ENCODE measurements at regions of chr22 and their contacts with region 1.

Region 1: DNA sequence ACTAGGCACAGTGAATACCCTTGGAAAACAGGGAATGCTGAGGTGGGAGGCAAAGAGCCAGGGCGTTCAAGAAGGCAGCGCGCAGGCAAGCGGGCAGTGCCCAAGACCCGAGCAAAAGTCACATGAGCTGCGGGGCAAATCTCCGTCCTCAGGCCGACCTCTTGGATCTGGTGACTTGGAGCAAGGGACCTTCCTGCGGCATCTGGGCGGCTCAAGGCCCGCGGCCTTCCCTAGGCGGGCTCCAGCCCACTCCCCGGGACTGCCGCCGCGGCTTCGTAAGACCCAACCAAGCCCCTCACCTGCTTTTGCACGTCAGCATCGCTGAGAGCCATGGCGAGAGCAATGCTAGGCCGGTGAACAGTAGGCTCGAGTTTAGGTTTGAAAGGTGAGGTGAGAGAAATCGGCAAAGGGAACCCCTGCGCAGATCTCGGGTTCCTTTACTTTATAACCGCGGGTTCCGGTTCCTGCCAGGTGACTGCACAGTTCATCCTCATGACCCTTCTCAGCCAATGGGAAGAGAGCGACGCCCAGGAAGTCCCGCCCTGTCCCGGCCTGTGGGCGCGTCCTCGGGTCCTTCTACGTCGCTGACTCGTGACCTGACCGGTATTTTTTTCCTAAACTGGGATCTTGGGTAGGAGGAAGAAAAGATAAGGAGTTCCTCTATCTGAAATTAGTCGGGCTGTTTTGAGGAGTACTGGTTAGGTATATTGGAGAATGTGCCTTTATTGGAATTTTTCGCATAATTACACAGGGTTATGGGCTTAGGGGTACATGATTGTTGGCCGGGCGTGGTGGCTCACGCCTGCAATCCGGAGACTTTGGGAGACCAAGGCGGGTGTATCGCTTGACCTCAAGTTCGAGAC is at the start of gene ATP6V1E1:
- DNase-seq: peak; percentile 99
- H3K4me3 ChIP-seq: peak within 1 kb of the TSS; percentile 66 to 99 (median 88)
- H3K27ac ChIP-seq: peak within 1 kb of the TSS; percentile 88 to 92 (median 90)
- H3K4me1 ChIP-seq: peaks cover 0 to 32% (median 24%) of the 10 kb centered on the region in 4 donors
- H3K27me3 ChIP-seq: no peaks in the 10 kb centered on the region
- CTCF ChIP-seq: no peak
- EP300 ChIP-seq: peak in 1 of 4 donors; percentile 54
- POLR2A ChIP-seq: peak; percentile 67 to 95
- total RNA-seq, gene ATP6V1E1: 119 to 160 (median 138) TPM

Region 2: DNA sequence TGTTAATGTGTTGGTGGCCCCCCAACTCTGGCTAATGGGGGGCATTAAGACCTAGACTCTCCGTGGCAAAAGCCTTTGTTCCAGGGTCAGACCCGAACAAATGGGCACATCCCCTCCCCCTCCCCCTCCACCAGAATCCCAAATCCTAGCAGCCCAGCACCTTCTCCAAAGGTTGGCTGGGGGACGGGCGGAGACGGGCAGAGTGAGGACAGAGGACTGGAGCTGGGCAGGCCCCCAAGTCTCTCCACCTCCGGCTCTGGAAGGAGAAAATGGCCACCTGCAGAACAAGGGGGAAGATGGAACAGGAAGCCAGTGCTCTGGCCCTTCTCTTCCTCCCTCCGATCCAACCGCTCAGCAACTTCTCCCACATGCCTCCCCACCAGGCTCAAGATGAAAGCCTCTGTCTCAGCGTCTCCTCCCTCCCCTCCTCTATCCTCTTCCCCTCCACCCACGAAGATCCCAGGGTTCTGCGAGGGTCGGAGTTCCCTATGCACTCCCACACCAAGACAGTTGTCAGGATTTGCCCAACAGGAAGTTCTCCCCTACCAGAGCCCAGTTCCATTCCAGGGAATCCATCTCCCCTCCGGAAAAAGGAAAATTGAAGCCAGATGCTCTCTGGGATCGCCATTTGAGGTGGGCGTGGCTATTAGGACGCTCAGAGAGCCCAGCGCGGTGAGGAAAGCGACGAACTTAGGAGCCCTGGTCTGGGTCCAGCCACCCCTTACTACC is 429.4 kb before region 1 on chr22:
- intact Hi-C with region 1: no loop called
- DNase-seq: no peak
- H3K4me3 ChIP-seq: peak overlapping the region in 3 of 4 donors; percentile 27 to 44 (median 35)
- H3K27ac ChIP-seq: peak overlapping the region; percentile 27 to 61 (median 36)
- H3K4me1 ChIP-seq: peaks cover 0 to 12% (median 0%) of the 10 kb centered on the region in 4 donors
- H3K27me3 ChIP-seq: peaks cover 0 to 34% (median 7%) of the 10 kb centered on the region in 3 donors
- CTCF ChIP-seq: no peak
- EP300 ChIP-seq: no peak
- POLR2A ChIP-seq: no peak

Region 3: GRCh38 chr22:17606496-17606895 is 22.0 kb before region 1 on chr22:
- intact Hi-C with region 1: loop called (anchors 2 kb)
- DNase-seq: peak; percentile 77
- H3K4me3 ChIP-seq: no peak overlapping the region
- H3K27ac ChIP-seq: peak overlapping the region; percentile 53 to 79 (median 68)
- H3K4me1 ChIP-seq: peaks cover 0 to 24% (median 15%) of the 10 kb centered on the region in 4 donors
- H3K27me3 ChIP-seq: no peaks in the 10 kb centered on the region
- CTCF ChIP-seq: no peak
- EP300 ChIP-seq: peak in 3 of 4 donors; percentile 40 to 93 (median 41)
- POLR2A ChIP-seq: no peak

Measured in sigmoid colon (tissue), 7 donors.